ENCODE measurements at regions of chr10 and their contacts with region 1.

Region 1: DNA sequence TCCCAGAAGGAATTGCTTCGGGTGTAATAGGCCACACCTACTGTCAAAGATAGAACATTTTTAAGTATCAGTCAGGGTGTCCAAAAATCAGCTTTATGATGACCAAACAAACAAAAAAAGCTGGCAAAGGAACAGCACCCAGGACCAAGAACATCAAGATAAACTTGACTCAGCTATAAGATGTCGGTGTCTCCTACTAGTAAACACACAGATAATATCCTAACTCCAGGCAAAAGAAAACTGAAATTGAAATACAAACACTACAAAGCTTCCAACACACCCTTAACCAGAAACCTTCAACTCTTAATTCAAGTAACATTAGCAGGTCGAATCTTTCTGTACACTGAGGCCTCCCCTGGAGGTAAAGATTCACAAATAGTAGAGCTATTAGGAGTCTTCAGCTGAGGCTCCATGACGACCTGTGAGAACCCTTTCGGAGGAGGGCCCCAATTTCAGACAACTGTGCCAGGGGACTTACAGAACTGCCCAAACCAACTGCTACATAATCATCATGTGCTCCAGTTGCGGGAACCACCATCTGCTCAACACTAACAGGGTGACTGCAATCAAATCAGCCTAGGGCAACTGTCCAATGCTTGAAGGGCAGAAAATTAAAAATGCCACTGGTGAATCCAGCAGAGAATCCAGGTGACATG is 20.2 kb downstream of the XPNPEP1 start:
- DNase-seq: no peak
- ATAC-seq: peak; percentile 89
- H3K4me3 ChIP-seq: no peak overlapping the region
- H3K27ac ChIP-seq: peak overlapping the region; percentile 50; the same call in 1 of the 2 replicates
- H3K4me1 ChIP-seq: peaks cover 6% of the 10 kb centered on the region
- H3K27me3 ChIP-seq: no peaks in the 10 kb centered on the region
- CTCF ChIP-seq: no peak
- EP300 ChIP-seq: no peak
- POLR2A ChIP-seq: no peak
- RAD21 ChIP-seq: no peak

Region 2: GRCh38 chr10:109714869-109715268 is 188.2 kb before region 1 on chr10:
- CTCF ChIA-PET with region 1: no interaction called
- POLR2A ChIA-PET with region 1: no interaction called
- RAD21 ChIA-PET with region 1: no interaction called
- SMC1A ChIA-PET with region 1: no interaction called
- in situ Hi-C with region 1: no loop called
- intact Hi-C with region 1: no loop called
- DNase-seq: no peak
- ATAC-seq: no peak
- H3K4me3 ChIP-seq: no peak overlapping the region
- H3K27ac ChIP-seq: no peak overlapping the region
- H3K4me1 ChIP-seq: no peaks in the 10 kb centered on the region
- H3K27me3 ChIP-seq: no peaks in the 10 kb centered on the region
- CTCF ChIP-seq: no peak
- EP300 ChIP-seq: no peak
- POLR2A ChIP-seq: no peak
- RAD21 ChIP-seq: no peak

Region 3: GRCh38 chr10:109726473-109726872 is 176.6 kb before region 1 on chr10:
- CTCF ChIA-PET with region 1: no interaction called
- POLR2A ChIA-PET with region 1: no interaction called
- RAD21 ChIA-PET with region 1: no interaction called
- SMC1A ChIA-PET with region 1: no interaction called
- in situ Hi-C with region 1: no loop called
- intact Hi-C with region 1: no loop called
- DNase-seq: no peak
- ATAC-seq: no peak
- H3K4me3 ChIP-seq: no peak overlapping the region
- H3K27ac ChIP-seq: no peak overlapping the region
- H3K4me1 ChIP-seq: no peaks in the 10 kb centered on the region
- H3K27me3 ChIP-seq: no peaks in the 10 kb centered on the region
- CTCF ChIP-seq: no peak
- EP300 ChIP-seq: no peak
- POLR2A ChIP-seq: no peak
- RAD21 ChIP-seq: no peak

Region 4: GRCh38 chr10:109914966-109915365 is 11.9 kb after region 1 on chr10:
- CTCF ChIA-PET with region 1: interaction called, 18 read pairs
- POLR2A ChIA-PET with region 1: interaction called, 6 read pairs
- RAD21 ChIA-PET with region 1: interaction called, 7 read pairs
- SMC1A ChIA-PET with region 1: interaction called, 19 read pairs
- in situ Hi-C with region 1: no loop called
- intact Hi-C with region 1: no loop called
- DNase-seq: peak; percentile 41
- ATAC-seq: peak; percentile 18; the same call in 2 of the 3 replicates
- H3K4me3 ChIP-seq: no peak overlapping the region
- H3K27ac ChIP-seq: peak overlapping the region; percentile 25; the same call in 1 of the 2 replicates
- H3K4me1 ChIP-seq: peaks cover 61% of the 10 kb centered on the region
- H3K27me3 ChIP-seq: no peaks in the 10 kb centered on the region
- CTCF ChIP-seq: no peak
- EP300 ChIP-seq: no peak
- POLR2A ChIP-seq: no peak
- RAD21 ChIP-seq: no peak

Region 5: GRCh38 chr10:109928475-109928891 is 25.4 kb after region 1 on chr10:
- CTCF ChIA-PET with region 1: no interaction called
- POLR2A ChIA-PET with region 1: no interaction called
- RAD21 ChIA-PET with region 1: no interaction called
- SMC1A ChIA-PET with region 1: no interaction called
- in situ Hi-C with region 1: no loop called
- intact Hi-C with region 1: no loop called
- DNase-seq: no peak
- ATAC-seq: no peak
- H3K4me3 ChIP-seq: no peak overlapping the region
- H3K27ac ChIP-seq: no peak overlapping the region
- H3K4me1 ChIP-seq: peaks cover 3% of the 10 kb centered on the region; the same call in 1 of the 2 replicates
- H3K27me3 ChIP-seq: no peaks in the 10 kb centered on the region; a peak in 1 of 4 replicates
- CTCF ChIP-seq: no peak
- EP300 ChIP-seq: no peak
- POLR2A ChIP-seq: no peak
- RAD21 ChIP-seq: no peak

Measured in GM12878 (cell line).